Panc1 (cell line): ENCODE measurements at regions of chr2 and their contacts with region 1.

Region 1: DNA sequence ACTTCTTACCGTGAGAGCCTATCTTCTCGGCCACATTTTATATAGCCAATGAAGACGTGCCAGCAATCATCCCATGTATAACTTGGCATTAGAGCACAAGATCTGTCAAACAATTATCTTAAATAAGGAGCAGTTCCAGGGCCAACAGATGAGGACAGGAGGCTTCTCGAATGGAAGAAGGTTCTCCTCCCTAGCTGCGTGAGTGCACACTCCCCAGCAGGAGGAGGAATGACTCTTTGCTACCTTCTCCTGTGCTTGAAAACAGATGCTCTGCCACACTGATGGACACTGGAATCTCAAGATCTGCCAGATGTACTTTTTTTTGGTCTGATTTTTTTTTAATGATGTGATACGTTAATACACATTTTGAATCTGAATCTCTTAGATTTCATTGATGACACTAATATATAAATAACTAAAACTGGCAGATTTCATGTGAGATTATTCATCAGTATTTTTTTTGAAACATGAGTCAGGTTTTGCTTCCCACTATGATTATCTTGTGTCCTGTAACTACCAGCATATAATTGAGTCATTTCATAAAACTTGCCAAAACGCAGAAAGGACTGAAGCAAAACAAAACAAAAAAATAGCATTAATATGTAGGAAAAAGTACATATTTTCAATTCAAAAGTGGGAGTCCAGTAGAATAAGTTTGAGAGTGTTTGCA is 626 bp upstream of the VIT start:
- DNase-seq: no peak
- ATAC-seq: peak; percentile 85
- H3K4me3 ChIP-seq: no peak overlapping the region
- H3K27ac ChIP-seq: peak overlapping the region; percentile 80
- H3K4me1 ChIP-seq: peaks cover 26% of the 10 kb centered on the region
- H3K27me3 ChIP-seq: no peaks in the 10 kb centered on the region
- CTCF ChIP-seq: peak; percentile 74

Region 2: GRCh38 chr2:36618028-36618780 is 77.7 kb before region 1 on chr2:
- CTCF ChIA-PET with region 1: no interaction called
- POLR2A ChIA-PET with region 1: no interaction called
- in situ Hi-C with region 1: no loop called
- intact Hi-C with region 1: no loop called
- DNase-seq: peak; percentile 35
- ATAC-seq: peak; percentile 94
- H3K4me3 ChIP-seq: no peak overlapping the region
- H3K27ac ChIP-seq: no peak overlapping the region
- H3K4me1 ChIP-seq: no peaks in the 10 kb centered on the region
- H3K27me3 ChIP-seq: no peaks in the 10 kb centered on the region
- CTCF ChIP-seq: no peak

Region 3: GRCh38 chr2:36770542-36771287 is 74.8 kb after region 1 on chr2:
- CTCF ChIA-PET with region 1: interaction called, 3 read pairs
- POLR2A ChIA-PET with region 1: no interaction called
- in situ Hi-C with region 1: no loop called
- intact Hi-C with region 1: loop called (anchors 2 kb)
- DNase-seq: peak; percentile 27
- ATAC-seq: peak; percentile 88
- H3K4me3 ChIP-seq: no peak overlapping the region
- H3K27ac ChIP-seq: no peak overlapping the region
- H3K4me1 ChIP-seq: no peaks in the 10 kb centered on the region
- H3K27me3 ChIP-seq: no peaks in the 10 kb centered on the region
- CTCF ChIP-seq: peak; percentile 91